AG04449 (cell line): ENCODE measurements at regions of chr19 and their contacts with region 1.

Region 1: DNA sequence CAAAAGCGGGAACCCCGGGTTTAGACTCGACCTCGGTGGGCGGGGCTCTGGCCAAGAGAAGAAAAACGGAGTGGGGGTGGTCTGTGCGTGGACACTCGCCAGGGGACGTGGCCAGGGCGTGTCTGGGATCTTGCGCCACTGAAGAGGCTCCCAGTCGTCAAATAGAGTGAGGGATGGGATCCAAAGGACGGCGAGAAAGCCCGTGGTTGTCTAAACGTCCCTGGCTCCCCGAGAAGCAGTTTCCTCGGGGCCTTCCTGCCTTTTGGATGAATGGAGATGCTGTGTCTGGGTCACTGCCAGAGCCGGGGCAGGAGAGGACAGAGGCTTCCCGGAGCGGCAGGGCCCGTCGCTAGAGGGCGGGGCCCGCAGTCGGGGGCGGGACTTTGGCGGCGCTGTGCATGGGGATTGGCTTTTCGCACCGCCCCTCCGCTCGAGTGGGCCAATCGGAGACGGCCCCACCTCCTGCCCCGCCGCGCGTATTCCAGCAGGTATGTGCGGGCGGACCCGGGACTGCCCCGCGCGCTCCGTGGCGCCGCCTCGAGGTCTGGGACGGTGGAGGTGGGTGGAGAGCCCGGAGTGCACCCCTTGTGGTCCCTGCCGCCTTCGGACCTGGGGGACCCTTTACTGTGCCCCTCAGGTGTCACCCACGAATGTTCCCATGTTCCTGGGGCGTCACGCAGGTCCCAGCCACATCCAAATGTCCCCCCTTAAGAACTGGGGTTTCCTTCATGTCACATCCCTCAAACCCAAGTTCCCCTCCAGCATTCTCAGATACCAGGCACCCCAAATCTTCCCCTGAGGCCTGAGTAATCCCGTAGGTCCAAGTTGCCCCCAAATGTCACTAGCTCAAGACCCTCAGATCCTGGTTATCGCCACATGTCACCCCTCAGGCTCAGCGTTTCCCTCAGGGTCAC is 38.3 kb downstream of the ZSWIM4 start:
- DNase-seq: no peak
- H3K4me3 ChIP-seq: no peak overlapping the region; the same call in 1 of the 2 replicates
- CTCF ChIP-seq: peak; percentile 46

Region 2: GRCh38 chr19:13804830-13805683 is 28.5 kb before region 1 on chr19:
- CTCF ChIA-PET with region 1: no interaction called
- POLR2A ChIA-PET with region 1: no interaction called
- DNase-seq: no peak
- H3K4me3 ChIP-seq: no peak overlapping the region
- CTCF ChIP-seq: peak; percentile 18

Region 3: GRCh38 chr19:13817615-13818371 is 15.8 kb before region 1 on chr19:
- CTCF ChIA-PET with region 1: no interaction called
- POLR2A ChIA-PET with region 1: no interaction called
- DNase-seq: no peak
- H3K4me3 ChIP-seq: no peak overlapping the region
- CTCF ChIP-seq: no peak

Region 4: GRCh38 chr19:13846557-13847406 is 13.2 kb after region 1 on chr19:
- CTCF ChIA-PET with region 1: interaction called, 6 read pairs
- POLR2A ChIA-PET with region 1: interaction called, 102 read pairs
- DNase-seq: no peak
- H3K4me3 ChIP-seq: peak overlapping the region; percentile 60
- CTCF ChIP-seq: no peak